ENCODE measurements at regions of chr12 and their contacts with region 1.

Region 1: GRCh38 chr12:27703710-27704452 is 6.8 kb upstream of the MRPS35 start:
- DNase-seq: peak in 1 of 2 donors; percentile 75
- ATAC-seq: peak; percentile 83
- H3K4me3 ChIP-seq: no peak overlapping the region
- H3K27ac ChIP-seq: no peak overlapping the region
- H3K4me1 ChIP-seq: no peaks in the 10 kb centered on the region
- H3K27me3 ChIP-seq: no peaks in the 10 kb centered on the region

Region 2: DNA sequence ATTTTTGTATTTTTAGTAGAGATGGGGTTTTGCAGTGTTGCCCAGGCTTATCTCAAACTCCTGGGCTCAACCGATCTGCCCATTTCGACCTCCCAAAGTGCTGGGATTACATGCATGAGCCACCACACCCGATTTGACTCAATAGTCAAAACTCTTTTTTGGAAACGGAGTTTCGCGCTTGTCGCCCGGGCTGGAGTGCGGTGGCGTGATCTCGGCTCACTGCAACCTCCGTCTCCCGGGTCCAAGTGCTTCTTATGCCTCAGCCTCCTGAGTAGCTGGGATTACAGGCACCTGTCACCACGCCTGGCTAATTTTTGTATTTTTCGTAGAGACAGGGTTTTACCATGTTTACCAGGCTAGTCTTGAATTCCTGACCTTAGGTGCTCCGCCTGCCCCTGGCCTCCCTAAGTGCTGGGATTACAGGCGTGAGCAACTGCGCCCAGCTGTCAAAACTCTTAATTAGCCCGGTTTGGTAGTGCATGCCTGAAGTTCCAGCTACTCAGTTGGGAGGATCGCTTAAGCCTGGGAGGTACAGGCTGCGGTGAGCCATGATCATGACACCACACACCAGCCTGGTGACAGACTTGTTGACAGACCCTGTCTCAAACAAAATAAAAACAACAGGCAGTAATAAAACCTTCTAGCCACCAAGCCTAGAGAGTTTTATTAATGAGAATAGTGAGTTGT is 669.1 kb before region 1 on chr12:
- intact Hi-C with region 1: loop called in 1 of 2 experiments (anchors 5 kb)
- DNase-seq: no peak
- ATAC-seq: no peak
- H3K4me3 ChIP-seq: no peak overlapping the region
- H3K27ac ChIP-seq: no peak overlapping the region
- H3K4me1 ChIP-seq: no peaks in the 10 kb centered on the region
- H3K27me3 ChIP-seq: no peaks in the 10 kb centered on the region

Region 3: GRCh38 chr12:27424631-27425230 is 279.1 kb before region 1 on chr12:
- intact Hi-C with region 1: loop called in 1 of 2 experiments (anchors 5 kb)
- DNase-seq: no peak
- ATAC-seq: peak; percentile 60
- H3K4me3 ChIP-seq: no peak overlapping the region
- H3K27ac ChIP-seq: peak overlapping the region; percentile 36 to 80
- H3K4me1 ChIP-seq: peaks cover 0 to 2% of the 10 kb centered on the region in 2 donors
- H3K27me3 ChIP-seq: no peaks in the 10 kb centered on the region

Measured in aorta (tissue), 5 donors.